ENCODE measurements at regions of chr19 and their contacts with region 1.

Region 1: DNA sequence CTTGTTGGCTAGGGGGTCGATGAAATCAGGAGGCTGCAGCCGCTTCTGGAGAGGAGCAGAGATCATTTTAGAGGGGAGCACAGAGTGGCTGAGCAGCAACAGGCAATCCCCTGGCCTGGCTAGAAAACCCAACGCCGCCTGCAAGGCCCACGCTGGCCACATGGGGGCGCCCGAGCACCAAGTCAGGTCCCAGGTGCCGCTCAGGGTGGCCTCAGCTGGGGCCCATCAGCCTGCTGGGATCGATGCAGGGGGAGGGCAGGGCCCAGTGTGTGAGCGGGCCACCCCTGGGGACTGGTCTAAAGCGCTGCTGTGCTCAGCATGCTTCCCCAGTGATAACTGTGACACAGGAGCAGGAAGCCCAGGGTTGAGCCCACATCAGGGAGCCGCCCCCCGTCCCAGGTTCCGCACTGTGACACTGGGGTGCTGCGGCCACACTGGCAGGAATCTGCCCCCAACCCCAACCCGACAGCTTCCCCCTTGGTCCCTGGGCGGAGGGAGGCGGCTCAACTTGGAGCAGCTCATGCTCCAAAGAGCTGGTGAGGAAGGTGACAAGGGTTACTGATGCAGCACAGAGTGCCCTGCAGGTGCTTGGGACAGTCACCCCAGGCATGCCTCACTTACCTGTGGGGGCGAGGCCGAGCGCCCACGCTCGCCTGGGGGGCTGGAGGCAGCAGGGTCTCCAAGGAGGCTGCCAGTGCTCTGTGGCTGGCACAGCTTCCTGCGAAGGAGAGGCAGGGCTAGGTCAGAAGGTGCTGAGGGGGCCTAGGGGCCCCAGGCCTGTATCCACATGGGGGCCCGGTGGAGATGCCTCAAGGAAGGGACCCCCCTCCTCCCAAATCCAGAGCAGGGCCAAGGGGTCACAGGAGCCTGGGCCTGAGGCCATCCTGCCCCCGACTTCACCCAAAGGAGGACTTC is 13.3 kb upstream of the ISYNA1 start:
- DNase-seq: peak; percentile 64
- ATAC-seq: peak; percentile 91
- H3K4me3 ChIP-seq: no peak overlapping the region
- H3K27ac ChIP-seq: no peak overlapping the region
- H3K4me1 ChIP-seq: peaks cover 13% of the 10 kb centered on the region
- H3K27me3 ChIP-seq: no peaks in the 10 kb centered on the region
- CTCF ChIP-seq: peak; percentile 96
- POLR2A ChIP-seq: 0 out of 2 replicates have a peak, but pooled peaks have one; percentile 54
- RAD21 ChIP-seq: peak; percentile 95

Region 2: DNA sequence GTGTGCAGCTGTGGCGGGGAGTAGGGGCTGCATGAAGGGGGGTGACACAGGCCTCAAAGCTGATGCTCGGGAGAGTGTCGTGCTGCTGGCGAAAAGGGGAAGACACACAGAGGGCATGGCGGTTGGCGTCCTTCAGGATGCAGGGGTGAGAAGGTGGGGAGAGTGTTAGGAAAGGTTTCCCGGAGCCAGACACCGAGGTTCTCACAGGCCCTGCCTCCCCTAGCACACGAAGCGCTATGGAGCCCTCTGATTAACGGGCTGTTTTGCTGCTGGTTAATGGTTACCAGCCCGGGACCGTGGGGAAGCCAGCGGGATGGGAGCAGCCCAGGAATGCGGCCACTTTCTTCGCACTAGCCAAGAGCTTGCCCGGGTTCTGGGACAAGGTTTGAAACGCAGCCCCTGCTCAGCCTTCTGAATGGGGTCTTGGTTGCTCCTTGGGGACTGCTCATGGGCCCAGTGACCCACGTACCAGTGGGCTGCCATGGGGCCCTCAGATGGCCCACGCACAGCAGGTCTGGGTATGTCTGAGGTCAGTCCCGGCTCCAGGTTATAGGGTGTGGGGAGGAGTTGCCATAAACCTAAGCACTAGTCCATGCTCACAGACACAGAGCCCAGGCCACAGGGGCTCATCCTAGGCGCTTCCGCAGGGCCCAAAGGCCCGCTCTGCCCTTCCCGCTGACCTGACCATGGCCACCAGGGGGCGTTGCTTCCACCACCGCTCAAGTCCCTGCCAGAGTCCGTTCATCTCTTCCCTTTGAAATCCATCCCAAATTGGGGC is 18.1 kb after region 1 on chr19:
- CTCF ChIA-PET with region 1: interaction called, 21 read pairs
- POLR2A ChIA-PET with region 1: interaction called, 3 read pairs
- dilution Hi-C with region 1: no loop called
- in situ Hi-C with region 1: no loop called
- intact Hi-C with region 1: no loop called
- DNase-seq: peak; percentile 66
- ATAC-seq: peak; percentile 25; the same call in 1 of the 2 replicates
- H3K4me3 ChIP-seq: no peak overlapping the region
- H3K27ac ChIP-seq: no peak overlapping the region
- H3K4me1 ChIP-seq: peaks cover 32% of the 10 kb centered on the region
- H3K27me3 ChIP-seq: no peaks in the 10 kb centered on the region
- CTCF ChIP-seq: peak; percentile 72
- POLR2A ChIP-seq: no peak
- RAD21 ChIP-seq: peak; percentile 71

Region 3: GRCh38 chr19:18571564-18572300 is 120.5 kb after region 1 on chr19 and contains the start of gene UBA52:
- CTCF ChIA-PET with region 1: interaction called, 3 read pairs
- POLR2A ChIA-PET with region 1: interaction called, 3 read pairs
- dilution Hi-C with region 1: no loop called
- in situ Hi-C with region 1: loop called (anchors 10 kb)
- intact Hi-C with region 1: loop called (anchors 1 kb)
- DNase-seq: peak; percentile 96
- ATAC-seq: peak; percentile 97
- H3K4me3 ChIP-seq: peak within 1 kb of the TSS; percentile 85
- H3K27ac ChIP-seq: peak within 1 kb of the TSS; percentile 65
- H3K4me1 ChIP-seq: peaks cover 10% of the 10 kb centered on the region
- H3K27me3 ChIP-seq: no peaks in the 10 kb centered on the region
- CTCF ChIP-seq: no peak
- POLR2A ChIP-seq: peak; percentile 96
- RAD21 ChIP-seq: no peak
- total RNA-seq, gene UBA52: 1,030 and 1,144 TPM in 2 replicates

Region 4: DNA sequence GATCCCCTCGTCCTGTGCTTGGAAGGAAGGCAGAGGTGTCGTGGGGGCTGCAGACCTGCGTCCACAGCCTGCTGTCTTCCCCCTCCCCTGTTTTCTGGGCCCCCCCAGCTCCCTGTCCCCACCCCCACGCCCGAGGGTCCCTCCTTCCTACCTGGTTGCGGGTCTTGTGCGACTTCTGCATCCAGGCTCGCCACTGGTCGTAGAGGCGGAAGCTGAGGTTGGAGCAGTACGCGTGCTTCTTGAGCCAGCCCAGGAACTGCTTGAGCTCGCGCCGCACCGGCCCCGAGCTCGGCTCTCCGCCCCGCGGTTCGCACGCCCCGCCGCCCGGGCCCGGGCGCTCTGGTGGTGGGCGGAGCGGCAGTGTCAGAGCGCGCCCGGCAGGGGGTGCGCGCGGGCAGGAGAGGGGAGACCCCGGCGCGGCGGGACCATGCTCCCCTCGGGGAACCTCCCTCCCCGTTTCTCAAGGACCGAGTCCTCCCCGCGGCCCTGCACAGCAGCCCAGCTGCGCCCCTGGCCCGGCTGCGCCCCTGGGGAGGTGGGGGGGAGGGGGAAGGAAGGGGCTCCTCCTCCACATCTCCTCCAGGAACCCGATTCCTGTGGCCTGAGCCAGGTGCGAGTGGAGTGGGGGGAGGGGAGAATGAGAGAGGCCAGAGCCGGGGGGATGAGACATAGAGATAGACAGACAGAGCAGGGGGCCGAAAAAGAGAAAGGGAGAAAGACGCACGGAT is 143.1 kb after region 1 on chr19:
- CTCF ChIA-PET with region 1: no interaction called
- POLR2A ChIA-PET with region 1: no interaction called
- dilution Hi-C with region 1: no loop called
- in situ Hi-C with region 1: no loop called
- intact Hi-C with region 1: loop called (anchors 1 kb)
- DNase-seq: peak; percentile 76
- ATAC-seq: peak; percentile 90
- H3K4me3 ChIP-seq: peak overlapping the region; percentile 20
- H3K27ac ChIP-seq: no peak overlapping the region; the same call in 1 of the 2 replicates
- H3K4me1 ChIP-seq: peaks cover 8% of the 10 kb centered on the region
- H3K27me3 ChIP-seq: no peaks in the 10 kb centered on the region; the same call in 1 of the 2 replicates
- CTCF ChIP-seq: peak; percentile 96
- POLR2A ChIP-seq: 0 out of 2 replicates have a peak, but pooled peaks have one; percentile 41
- RAD21 ChIP-seq: peak; percentile 89

Region 5: GRCh38 chr19:18846862-18847548 is 395.8 kb after region 1 on chr19:
- CTCF ChIA-PET with region 1: no interaction called
- POLR2A ChIA-PET with region 1: no interaction called
- dilution Hi-C with region 1: no loop called
- in situ Hi-C with region 1: loop called (anchors 5 kb)
- intact Hi-C with region 1: loop called (anchors 1 kb)
- DNase-seq: peak; percentile 69
- ATAC-seq: peak; percentile 93
- H3K4me3 ChIP-seq: no peak overlapping the region
- H3K27ac ChIP-seq: no peak overlapping the region
- H3K4me1 ChIP-seq: peaks cover 21% of the 10 kb centered on the region
- H3K27me3 ChIP-seq: no peaks in the 10 kb centered on the region
- CTCF ChIP-seq: peak; percentile 92
- POLR2A ChIP-seq: no peak
- RAD21 ChIP-seq: peak; percentile 96

Measured in IMR-90 (cell line).